ENCODE measurements at regions of chr1 and their contacts with region 1.

Region 1: DNA sequence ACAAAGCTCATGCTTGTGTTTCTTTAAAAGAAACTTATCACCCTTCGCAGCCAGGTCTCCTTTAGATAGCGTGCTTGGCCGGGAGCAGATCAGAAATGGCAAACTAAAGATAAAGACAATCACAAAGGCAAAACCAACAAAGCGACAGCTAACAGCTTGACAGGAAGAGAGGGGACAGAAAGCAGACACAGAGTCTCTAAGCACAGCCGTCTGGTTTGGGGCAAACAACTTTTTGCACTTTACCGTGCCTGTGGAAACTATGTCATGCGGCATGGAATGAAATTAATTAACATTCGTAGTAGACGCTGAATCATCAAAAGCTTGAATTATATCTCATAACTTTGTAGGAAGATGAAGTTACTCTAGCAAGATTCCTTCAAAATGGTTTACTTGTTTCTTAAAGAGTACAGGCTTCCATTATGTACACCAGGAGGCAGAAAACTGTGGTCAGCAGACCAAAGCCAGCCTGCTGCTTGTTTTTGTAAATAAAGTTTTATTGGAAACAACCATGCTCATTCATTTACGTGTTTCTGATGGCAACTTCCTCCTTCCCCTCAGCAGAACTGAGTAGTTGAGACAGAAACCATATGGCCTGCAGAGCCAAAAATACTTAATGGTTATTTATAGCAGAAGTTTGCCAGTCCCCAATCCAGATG is 183.2 kb downstream of the KIF26B start:
- DNase-seq: no peak
- ATAC-seq: no peak
- H3K4me3 ChIP-seq: no peak overlapping the region
- H3K27ac ChIP-seq: no peak overlapping the region
- H3K4me1 ChIP-seq: no peaks in the 10 kb centered on the region
- H3K27me3 ChIP-seq: no peaks in the 10 kb centered on the region
- CTCF ChIP-seq: no peak
- POLR2A ChIP-seq: no peak

Region 2: GRCh38 chr1:245277276-245277675 is 60.7 kb before region 1 on chr1:
- in situ Hi-C with region 1: no loop called
- intact Hi-C with region 1: loop called (anchors 10 kb)
- DNase-seq: no peak
- ATAC-seq: no peak
- H3K4me3 ChIP-seq: no peak overlapping the region
- H3K27ac ChIP-seq: no peak overlapping the region
- H3K4me1 ChIP-seq: no peaks in the 10 kb centered on the region
- H3K27me3 ChIP-seq: peaks cover 0 to 2% (median 0%) of the 10 kb centered on the region in 3 donors
- CTCF ChIP-seq: no peak
- POLR2A ChIP-seq: no peak